Activated T-helper 1 cell treated with anti-CD3 and anti-CD28 coated beads, Interleukin-12 subunit alpha, Interleukin-12 subunit beta, Interleukin-2, Interleukin-4 antibody, amounts not matched to agents 30 ng/mL and 10 ng/mL and 1 ng/mL, durations not matched to agents 14 hours and 24 hours and 36 hours (primary cell): ENCODE measurements at regions of chr2 and their contacts with region 1.

Region 1: GRCh38 chr2:15313657-15314056 is 247.5 kb downstream of the NBAS start:
- DNase-seq: no peak
- H3K4me3 Mint-ChIP-seq: no peak overlapping the region
- H3K27ac Mint-ChIP-seq: no peak overlapping the region
- H3K4me1 Mint-ChIP-seq: peaks cover 82% of the 10 kb centered on the region
- H3K27me3 Mint-ChIP-seq: peaks cover 3% of the 10 kb centered on the region

Region 2: GRCh38 chr2:14967729-14968128 is 345.9 kb before region 1 on chr2:
- intact Hi-C with region 1: no loop called
- DNase-seq: no peak
- H3K4me3 Mint-ChIP-seq: no peak overlapping the region
- H3K27ac Mint-ChIP-seq: no peak overlapping the region
- H3K4me1 Mint-ChIP-seq: no peaks in the 10 kb centered on the region
- H3K27me3 Mint-ChIP-seq: peaks cover 4% of the 10 kb centered on the region

Region 3: GRCh38 chr2:15302154-15302553 is 11.5 kb before region 1 on chr2:
- intact Hi-C with region 1: loop called (anchors 2 kb)
- DNase-seq: no peak
- H3K4me3 Mint-ChIP-seq: no peak overlapping the region
- H3K27ac Mint-ChIP-seq: no peak overlapping the region
- H3K4me1 Mint-ChIP-seq: peaks cover 57% of the 10 kb centered on the region
- H3K27me3 Mint-ChIP-seq: no peaks in the 10 kb centered on the region

Region 4: DNA sequence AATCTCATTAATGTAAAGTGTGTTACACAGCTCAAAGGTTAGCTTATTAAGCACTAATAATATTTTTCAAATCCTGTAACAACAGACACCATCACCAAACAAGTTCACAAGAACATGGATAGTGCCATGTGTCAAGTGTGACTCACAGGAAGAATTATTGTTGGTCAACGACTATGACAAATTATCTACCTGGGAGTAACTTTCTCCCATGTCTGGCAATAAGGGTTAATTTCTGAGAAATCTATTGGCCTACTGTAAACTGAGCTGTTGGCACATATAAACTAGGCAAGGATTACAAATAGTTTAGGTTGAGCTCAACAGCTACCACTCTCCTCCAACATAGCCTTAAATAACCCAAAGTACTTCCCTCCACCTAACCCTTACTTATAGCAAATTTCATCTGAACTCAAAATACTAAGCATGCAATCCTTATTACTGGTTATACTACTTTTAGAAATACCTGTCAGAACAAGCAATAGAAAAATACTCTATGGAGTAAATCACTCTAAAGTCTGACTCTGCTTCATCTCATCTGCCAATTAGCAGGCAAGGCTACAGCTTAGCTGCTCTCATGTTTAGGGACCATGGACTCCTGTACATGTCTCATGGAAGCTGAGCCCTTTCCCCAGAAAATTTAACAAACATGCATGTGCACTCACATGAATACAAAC is 24.5 kb after region 1 on chr2:
- intact Hi-C with region 1: no loop called
- DNase-seq: no peak
- H3K4me3 Mint-ChIP-seq: no peak overlapping the region
- H3K27ac Mint-ChIP-seq: no peak overlapping the region
- H3K4me1 Mint-ChIP-seq: peaks cover 5% of the 10 kb centered on the region
- H3K27me3 Mint-ChIP-seq: no peaks in the 10 kb centered on the region

Region 5: DNA sequence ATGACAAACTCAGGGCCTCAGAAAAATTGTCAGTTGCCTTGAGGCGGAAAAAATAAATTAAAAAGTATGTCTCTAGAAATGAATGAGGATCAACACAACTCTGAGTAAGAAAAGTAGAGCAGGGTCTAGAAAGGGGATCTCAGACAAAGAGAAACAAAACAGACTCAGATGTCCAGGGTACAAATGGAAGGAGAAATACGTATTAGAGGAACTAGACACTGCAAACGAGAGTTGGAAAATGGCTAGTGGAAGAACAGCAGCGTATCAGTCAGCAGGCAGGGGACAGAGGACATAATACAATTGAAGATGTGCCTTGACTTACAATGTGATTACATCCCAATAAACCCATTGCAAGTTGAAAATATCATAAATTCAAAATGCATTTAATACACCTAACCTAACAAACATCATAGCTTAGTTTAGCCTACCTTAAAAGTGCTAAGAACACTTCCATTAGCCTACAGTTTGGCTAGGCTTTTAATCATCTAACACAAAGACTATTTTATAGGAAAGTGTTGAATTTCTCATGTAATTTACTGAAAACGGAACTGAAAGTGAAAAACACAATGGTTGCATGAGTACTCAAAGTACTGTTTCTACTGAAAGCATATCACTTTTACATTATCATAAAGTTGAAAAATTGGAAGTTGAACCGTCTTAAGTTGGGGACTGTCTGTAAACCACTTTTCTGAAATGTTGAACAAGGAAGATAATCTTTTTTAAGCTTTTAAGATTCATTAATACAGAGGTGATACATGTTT is 64.7 kb after region 1 on chr2:
- intact Hi-C with region 1: loop called (anchors 5 kb)
- DNase-seq: no peak
- H3K4me3 Mint-ChIP-seq: no peak overlapping the region
- H3K27ac Mint-ChIP-seq: no peak overlapping the region
- H3K4me1 Mint-ChIP-seq: peaks cover 14% of the 10 kb centered on the region
- H3K27me3 Mint-ChIP-seq: no peaks in the 10 kb centered on the region